ENCODE measurements at regions of chr18 and their contacts with region 1.

Region 1: GRCh38 chr18:22930089-22930713 is 2.9 kb upstream of the RBBP8 start:
- DNase-seq: peak; percentile 91
- ATAC-seq: peak; percentile 35
- H3K4me3 Mint-ChIP-seq: no peak overlapping the region
- H3K27ac Mint-ChIP-seq: no peak overlapping the region
- H3K4me1 Mint-ChIP-seq: peaks cover 22% of the 10 kb centered on the region
- H3K27me3 Mint-ChIP-seq: peaks cover 3% of the 10 kb centered on the region

Region 2: DNA sequence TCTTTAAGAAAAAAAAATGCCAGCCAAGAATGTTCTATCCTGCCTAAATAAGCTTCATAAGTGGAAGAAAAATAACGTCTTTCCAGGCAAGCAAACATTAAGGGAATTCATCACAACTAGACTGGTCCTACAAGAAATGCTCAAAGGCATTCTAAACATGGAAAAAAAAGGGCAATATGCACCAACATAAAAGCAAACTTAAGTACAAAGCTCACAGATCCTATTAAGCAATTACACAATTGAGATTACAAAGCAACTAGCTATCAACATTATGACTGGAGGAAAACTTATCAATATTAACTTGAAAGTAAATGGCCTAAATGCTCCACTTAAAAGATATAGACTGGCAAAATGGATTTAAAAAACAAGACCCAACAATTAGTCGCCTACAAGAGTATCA is 271.9 kb before region 1 on chr18:
- CTCF ChIA-PET with region 1: no interaction called
- POLR2A ChIA-PET with region 1: no interaction called
- DNase-seq: no peak
- ATAC-seq: no peak
- H3K4me3 Mint-ChIP-seq: no peak overlapping the region
- H3K27ac Mint-ChIP-seq: no peak overlapping the region
- H3K4me1 Mint-ChIP-seq: no peaks in the 10 kb centered on the region
- H3K27me3 Mint-ChIP-seq: no peaks in the 10 kb centered on the region

Region 3: GRCh38 chr18:22946846-22947245 is 16.6 kb after region 1 on chr18:
- CTCF ChIA-PET with region 1: interaction called, 10 read pairs
- POLR2A ChIA-PET with region 1: no interaction called
- DNase-seq: no peak
- ATAC-seq: no peak
- H3K4me3 Mint-ChIP-seq: no peak overlapping the region
- H3K27ac Mint-ChIP-seq: no peak overlapping the region
- H3K4me1 Mint-ChIP-seq: no peaks in the 10 kb centered on the region
- H3K27me3 Mint-ChIP-seq: no peaks in the 10 kb centered on the region

Region 4: DNA sequence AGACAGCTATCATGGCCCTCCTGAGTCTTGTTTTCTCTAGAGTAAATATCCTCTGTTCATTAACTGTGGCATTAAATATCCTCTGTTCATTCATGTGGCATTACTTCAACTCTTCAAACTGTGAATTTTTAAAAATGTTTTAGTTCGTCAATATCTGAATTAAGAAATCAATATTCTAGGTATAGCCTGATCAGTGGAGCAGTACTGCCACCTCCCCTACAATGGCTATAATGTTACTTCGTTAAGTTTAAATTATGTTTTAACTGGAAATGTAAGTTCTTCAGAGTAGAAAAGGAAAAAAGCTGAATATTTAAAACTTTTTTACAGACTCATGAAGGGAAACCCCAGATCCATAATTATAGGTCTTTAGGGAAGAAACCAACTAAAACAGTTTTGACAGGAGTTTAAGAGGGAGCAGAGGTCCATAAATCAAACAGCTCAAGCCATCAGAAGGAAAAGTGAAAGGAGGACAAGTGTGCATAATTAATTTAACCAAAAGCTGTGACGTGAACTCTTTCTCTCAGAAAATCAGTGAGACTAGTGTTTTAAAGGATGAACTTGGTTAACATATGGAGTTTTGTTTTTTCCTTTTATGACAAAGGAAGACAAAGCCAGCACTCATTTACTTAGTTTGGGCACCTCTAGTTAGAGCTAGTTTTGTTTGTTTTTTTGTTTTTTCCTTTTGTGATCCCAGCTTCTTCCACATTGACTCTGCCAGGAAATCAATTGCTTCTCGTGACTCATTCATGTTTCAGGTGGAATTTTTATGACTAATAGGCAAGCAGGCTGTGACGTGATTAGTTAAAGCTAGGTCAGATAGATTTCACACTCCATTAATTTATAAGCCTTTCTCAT is 47.9 kb after region 1 on chr18:
- CTCF ChIA-PET with region 1: interaction called, 63 read pairs
- POLR2A ChIA-PET with region 1: interaction called, 3 read pairs
- DNase-seq: no peak
- ATAC-seq: no peak
- H3K4me3 Mint-ChIP-seq: no peak overlapping the region
- H3K27ac Mint-ChIP-seq: peak overlapping the region; percentile 43
- H3K4me1 Mint-ChIP-seq: peaks cover 7% of the 10 kb centered on the region
- H3K27me3 Mint-ChIP-seq: no peaks in the 10 kb centered on the region

Region 5: GRCh38 chr18:22983175-22983574 is 53.0 kb after region 1 on chr18:
- CTCF ChIA-PET with region 1: interaction called, 63 read pairs
- POLR2A ChIA-PET with region 1: no interaction called
- DNase-seq: no peak
- ATAC-seq: no peak
- H3K4me3 Mint-ChIP-seq: no peak overlapping the region
- H3K27ac Mint-ChIP-seq: no peak overlapping the region
- H3K4me1 Mint-ChIP-seq: peaks cover 3% of the 10 kb centered on the region
- H3K27me3 Mint-ChIP-seq: no peaks in the 10 kb centered on the region

Measured in activated CD8-positive, alpha-beta T cell treated with anti-CD3 and anti-CD28 coated beads, Interleukin-2, amount 10 ng/mL, durations not matched to agents 7 days and 5 days (primary cell).